ENCODE measurements at regions of chr7 and their contacts with region 1.

Region 1: DNA sequence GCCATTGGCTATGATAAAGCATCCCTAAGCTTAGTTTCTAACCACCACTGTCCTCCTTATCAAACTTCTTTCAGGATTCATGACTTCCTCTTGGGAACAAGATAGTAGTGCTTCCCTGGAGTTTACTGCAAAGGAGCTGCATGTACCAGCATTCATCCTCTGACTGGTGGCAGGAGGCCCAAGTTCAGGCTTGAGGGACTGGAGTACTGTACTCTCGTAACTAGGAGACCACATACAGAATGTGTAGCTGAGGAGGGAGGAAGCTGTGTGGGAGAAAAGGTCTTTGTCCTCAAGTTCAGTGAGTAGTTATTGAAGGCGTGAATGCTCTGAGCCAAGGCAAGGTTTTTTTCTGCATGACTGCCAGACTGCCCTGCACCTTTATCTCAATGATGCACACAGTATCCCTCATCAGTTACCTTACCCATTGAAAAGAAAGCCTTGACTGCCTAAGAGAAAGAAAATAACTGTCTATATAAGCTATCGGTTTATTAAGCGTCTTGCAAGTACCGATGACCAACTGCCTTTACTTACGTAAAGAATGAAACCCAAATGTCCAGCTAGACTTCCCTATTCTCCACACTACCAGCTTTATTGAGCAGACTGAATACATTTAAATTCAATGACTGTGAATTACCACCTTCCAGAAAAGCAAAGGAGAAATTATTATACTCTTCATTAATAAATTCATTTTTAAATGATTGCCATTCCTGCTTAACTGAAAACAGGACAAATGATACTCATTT is 12.8 kb downstream of the SCRN1 start:
- DNase-seq: no peak
- H3K4me3 ChIP-seq: no peak overlapping the region
- H3K27ac ChIP-seq: no peak overlapping the region
- H3K4me1 ChIP-seq: no peaks in the 10 kb centered on the region
- H3K27me3 ChIP-seq: no peaks in the 10 kb centered on the region
- CTCF ChIP-seq: no peak
- EP300 ChIP-seq: no peak
- POLR2A ChIP-seq: no peak
- RAD21 ChIP-seq: no peak

Region 2: DNA sequence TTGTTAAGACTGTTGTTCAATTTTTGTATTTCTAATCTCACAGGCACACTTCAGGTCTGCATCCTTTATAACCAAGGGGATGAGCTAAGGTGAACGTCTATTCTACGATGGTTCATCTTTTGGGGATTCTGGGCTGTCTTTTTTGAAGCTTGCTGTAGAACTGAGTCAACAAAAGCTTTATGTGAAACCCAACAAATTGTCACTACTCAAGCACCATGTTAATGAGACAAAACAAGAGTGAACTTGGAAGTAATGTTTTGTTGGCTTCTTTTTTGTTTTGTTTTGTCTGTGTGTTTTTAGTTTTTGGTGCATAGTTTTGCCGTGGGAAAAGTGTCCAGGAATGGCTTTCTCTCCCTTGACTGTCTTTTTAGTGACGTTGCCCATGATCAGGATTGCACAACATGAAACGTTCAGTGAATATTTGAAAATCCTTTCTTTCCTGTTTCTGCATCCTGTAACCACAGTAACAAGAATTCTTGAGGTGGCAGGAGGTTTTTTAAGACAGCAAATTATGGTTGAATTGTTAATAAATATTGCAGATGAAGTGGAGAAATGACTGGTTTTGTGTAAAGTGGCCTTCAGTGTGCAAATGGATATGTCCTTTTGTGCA is 105.0 kb before region 1 on chr7:
- CTCF ChIA-PET with region 1: no interaction called
- POLR2A ChIA-PET with region 1: no interaction called
- DNase-seq: no peak
- H3K4me3 ChIP-seq: no peak overlapping the region
- H3K27ac ChIP-seq: no peak overlapping the region
- H3K4me1 ChIP-seq: no peaks in the 10 kb centered on the region; a peak in 1 of 7 replicates
- H3K27me3 ChIP-seq: no peaks in the 10 kb centered on the region
- CTCF ChIP-seq: no peak
- EP300 ChIP-seq: no peak
- POLR2A ChIP-seq: no peak
- RAD21 ChIP-seq: no peak

Region 3: GRCh38 chr7:29988424-29989256 is 11.8 kb after region 1 on chr7:
- CTCF ChIA-PET with region 1: interaction called, 21 read pairs
- POLR2A ChIA-PET with region 1: interaction called, 4 read pairs
- DNase-seq: peak in 1 of 2 experiments; percentile 61
- H3K4me3 ChIP-seq: peak overlapping the region; percentile 84 to 90 (median 88)
- H3K27ac ChIP-seq: no peak overlapping the region; the same call in 1 of the 2 replicates
- H3K4me1 ChIP-seq: peaks cover 0 to 10% (median 6%) of the 10 kb centered on the region in 4 experiments; a peak in 5 of 7 replicates
- H3K27me3 ChIP-seq: peaks cover 0 to 2% (median 0%) of the 10 kb centered on the region in 4 experiments; a peak in 1 of 7 replicates
- CTCF ChIP-seq: no peak
- EP300 ChIP-seq: no peak
- POLR2A ChIP-seq: peak in 1 of 2 experiments; percentile 48; a peak in 1 of 3 replicates
- RAD21 ChIP-seq: no peak

Region 4: GRCh38 chr7:30010021-30010420 is 33.2 kb after region 1 on chr7:
- CTCF ChIA-PET with region 1: interaction called, 10 read pairs
- POLR2A ChIA-PET with region 1: interaction called, 3 read pairs
- DNase-seq: no peak
- H3K4me3 ChIP-seq: no peak overlapping the region
- H3K27ac ChIP-seq: no peak overlapping the region
- H3K4me1 ChIP-seq: no peaks in the 10 kb centered on the region
- H3K27me3 ChIP-seq: no peaks in the 10 kb centered on the region
- CTCF ChIP-seq: no peak
- EP300 ChIP-seq: no peak
- POLR2A ChIP-seq: no peak
- RAD21 ChIP-seq: no peak

Region 5: GRCh38 chr7:30143748-30144251 is 167.0 kb after region 1 on chr7:
- CTCF ChIA-PET with region 1: no interaction called
- POLR2A ChIA-PET with region 1: no interaction called
- DNase-seq: no peak
- H3K4me3 ChIP-seq: no peak overlapping the region
- H3K27ac ChIP-seq: no peak overlapping the region
- H3K4me1 ChIP-seq: peaks cover 0 to 3% (median 0%) of the 10 kb centered on the region in 4 experiments; a peak in 2 of 7 replicates
- H3K27me3 ChIP-seq: no peaks in the 10 kb centered on the region; a peak in 1 of 7 replicates
- CTCF ChIP-seq: no peak
- EP300 ChIP-seq: no peak
- POLR2A ChIP-seq: no peak
- RAD21 ChIP-seq: no peak